Activated T-helper 1 cell treated with anti-CD3 and anti-CD28 coated beads, Interleukin-12 subunit alpha, Interleukin-12 subunit beta, Interleukin-2, Interleukin-4 antibody, amounts not matched to agents 30 ng/mL and 10 ng/mL and 1 ng/mL, durations not matched to agents 14 hours and 24 hours and 36 hours (primary cell): ENCODE measurements at regions of chr5 and their contacts with region 1.

Region 1: DNA sequence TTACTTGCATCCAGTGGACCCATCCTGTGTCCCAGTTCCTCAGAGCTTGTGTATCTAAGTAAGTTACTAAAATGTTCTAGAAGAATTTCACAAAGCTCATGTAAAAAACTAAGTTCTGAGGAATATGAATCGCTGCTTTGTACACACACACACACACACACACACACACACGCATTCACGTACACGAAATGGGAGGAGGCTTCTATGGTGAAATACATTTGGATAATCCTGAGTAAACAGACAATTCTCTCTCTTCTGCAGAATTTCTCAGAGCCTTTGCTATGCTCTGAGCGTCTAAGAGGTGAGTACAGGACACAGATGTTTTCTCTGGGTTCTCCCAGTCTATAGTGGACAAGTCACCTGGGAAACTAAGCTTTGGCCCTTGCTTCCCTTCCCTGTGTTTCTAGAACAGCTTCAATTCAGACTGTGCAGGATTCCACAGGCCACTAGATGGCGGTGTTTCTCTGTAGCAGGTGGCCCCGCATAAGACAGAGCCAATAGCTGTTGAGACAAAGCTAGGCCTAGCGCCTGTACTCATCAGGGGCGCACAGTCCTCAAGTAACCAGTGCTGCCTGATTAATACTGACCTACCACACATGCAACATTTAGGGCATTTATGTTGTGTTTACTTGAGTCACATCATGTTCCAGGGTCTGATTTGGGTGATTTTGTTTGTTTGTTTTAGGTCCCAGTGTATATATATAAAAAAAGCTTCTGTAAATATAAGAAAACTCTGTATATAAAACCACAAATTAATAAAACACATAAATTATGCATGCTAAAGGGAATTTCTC is 114.8 kb downstream of the LIFR start:
- DNase-seq: peak; percentile 70
- H3K4me3 Mint-ChIP-seq: no peak overlapping the region
- H3K27ac Mint-ChIP-seq: no peak overlapping the region
- H3K4me1 Mint-ChIP-seq: no peaks in the 10 kb centered on the region
- H3K27me3 Mint-ChIP-seq: peaks cover 45% of the 10 kb centered on the region

Region 2: DNA sequence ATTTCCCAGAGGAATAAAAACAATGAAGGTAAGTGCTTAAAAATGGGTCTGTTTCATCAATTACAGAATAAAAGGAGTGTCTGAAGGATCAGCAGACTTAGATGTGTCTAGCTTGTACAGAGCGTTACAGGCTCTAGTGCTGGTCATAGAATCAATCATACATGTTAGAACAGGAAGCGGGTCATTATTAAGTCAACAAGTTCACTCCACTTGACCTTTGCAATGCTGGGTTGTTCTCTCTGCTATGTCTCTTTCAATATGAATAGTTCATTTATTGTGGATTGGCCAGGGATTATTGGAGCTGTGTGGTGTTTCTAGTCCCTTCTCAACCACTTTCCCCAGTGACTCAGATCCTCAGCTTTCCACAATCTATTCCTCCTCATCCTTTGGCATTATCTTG is 204.0 kb before region 1 on chr5:
- intact Hi-C with region 1: no loop called
- DNase-seq: no peak
- H3K4me3 Mint-ChIP-seq: no peak overlapping the region
- H3K27ac Mint-ChIP-seq: no peak overlapping the region
- H3K4me1 Mint-ChIP-seq: no peaks in the 10 kb centered on the region
- H3K27me3 Mint-ChIP-seq: no peaks in the 10 kb centered on the region

Region 3: DNA sequence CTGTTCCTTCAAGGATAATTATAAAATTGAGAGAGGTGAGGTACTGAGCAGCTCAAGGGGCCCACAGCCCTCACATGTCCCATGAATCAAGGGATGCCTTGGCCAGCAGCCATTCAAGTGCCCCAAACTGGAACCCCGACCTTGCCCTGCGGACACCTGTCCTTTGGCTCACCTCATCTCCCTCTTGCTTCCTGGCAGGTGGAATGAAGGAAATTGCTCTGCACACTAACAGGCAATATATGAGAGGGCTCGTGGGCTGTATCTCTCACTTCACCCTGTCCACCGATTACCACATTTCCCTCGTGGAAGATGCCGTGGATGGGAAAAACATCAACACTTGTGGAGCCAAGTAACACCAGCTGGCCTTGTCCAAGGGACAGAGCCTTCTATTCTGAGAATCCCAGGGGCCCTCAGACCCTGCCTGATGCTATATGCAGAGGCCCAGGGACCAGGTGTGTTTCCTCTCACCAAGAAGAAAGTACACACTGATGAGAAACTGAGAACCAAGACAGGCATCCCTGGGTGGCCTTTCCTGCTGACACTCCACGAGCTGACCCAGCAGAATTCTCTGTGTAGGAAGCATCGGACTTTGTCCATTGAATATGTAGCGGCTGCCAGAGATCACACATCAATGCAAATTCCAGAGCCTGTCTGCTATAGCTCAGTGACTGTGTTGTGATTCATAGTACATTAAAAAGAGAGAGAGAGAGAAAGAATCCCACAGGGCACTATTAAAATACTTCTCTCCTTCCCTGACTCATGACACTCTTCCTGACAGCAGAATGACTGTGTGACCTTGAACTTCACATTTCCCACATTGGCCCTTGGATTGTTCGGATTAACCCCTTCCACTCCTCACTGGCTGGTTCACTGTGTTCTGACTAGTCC is 22.2 kb after region 1 on chr5:
- intact Hi-C with region 1: no loop called
- DNase-seq: no peak
- H3K4me3 Mint-ChIP-seq: no peak overlapping the region
- H3K27ac Mint-ChIP-seq: no peak overlapping the region
- H3K4me1 Mint-ChIP-seq: no peaks in the 10 kb centered on the region
- H3K27me3 Mint-ChIP-seq: peaks cover 26% of the 10 kb centered on the region

Region 4: GRCh38 chr5:38551030-38552017 is 109.7 kb after region 1 on chr5:
- intact Hi-C with region 1: loop called (anchors 1 kb)
- DNase-seq: no peak
- H3K4me3 Mint-ChIP-seq: no peak overlapping the region
- H3K27ac Mint-ChIP-seq: no peak overlapping the region
- H3K4me1 Mint-ChIP-seq: peaks cover 5% of the 10 kb centered on the region
- H3K27me3 Mint-ChIP-seq: peaks cover 46% of the 10 kb centered on the region

Region 5: DNA sequence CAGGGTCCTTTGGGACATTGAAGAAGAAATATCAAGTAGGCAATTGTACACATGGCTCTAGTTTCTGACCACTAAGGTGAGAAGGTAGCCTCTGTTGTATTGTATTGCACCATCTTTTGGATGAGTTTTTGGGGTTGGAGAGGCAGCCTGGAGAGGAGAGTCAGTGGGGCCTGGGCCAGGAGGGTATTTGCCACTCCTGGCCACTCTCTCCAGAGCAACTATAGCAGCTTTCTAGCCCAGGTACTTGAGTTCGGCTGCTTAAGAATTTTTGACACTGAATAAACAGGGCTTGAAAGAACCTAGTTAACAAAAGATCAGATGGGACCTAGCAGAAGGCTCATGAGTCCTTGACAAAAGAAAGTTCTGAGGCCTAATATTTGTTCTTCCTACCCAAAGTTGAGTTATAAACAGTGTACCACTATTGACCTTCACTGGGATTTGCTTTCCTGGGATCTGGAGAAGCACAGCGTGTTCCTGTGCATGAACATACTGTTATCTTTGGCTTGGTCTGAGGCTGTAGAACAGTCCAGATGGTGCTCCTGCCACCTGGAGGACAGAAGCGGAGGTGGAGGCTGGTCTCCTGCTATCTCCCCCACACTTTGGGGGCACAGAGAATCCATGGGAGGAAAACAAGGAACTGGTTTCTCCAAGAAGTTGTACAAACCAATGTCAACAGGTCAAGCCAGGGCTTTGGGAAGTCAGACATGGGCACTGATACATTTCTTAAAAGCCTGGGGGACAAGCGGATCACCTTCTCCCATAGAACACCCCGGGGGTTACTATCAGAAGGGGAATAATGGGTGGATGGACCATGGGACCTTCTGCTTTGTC is 225.2 kb after region 1 on chr5:
- intact Hi-C with region 1: loop called (anchors 1 kb)
- DNase-seq: no peak
- H3K4me3 Mint-ChIP-seq: no peak overlapping the region
- H3K27ac Mint-ChIP-seq: no peak overlapping the region
- H3K4me1 Mint-ChIP-seq: no peaks in the 10 kb centered on the region
- H3K27me3 Mint-ChIP-seq: peaks cover 3% of the 10 kb centered on the region

Region 6: GRCh38 chr5:38809388-38810359 is 368.0 kb after region 1 on chr5:
- intact Hi-C with region 1: loop called (anchors 1 kb)
- DNase-seq: peak; percentile 24
- H3K4me3 Mint-ChIP-seq: no peak overlapping the region
- H3K27ac Mint-ChIP-seq: no peak overlapping the region
- H3K4me1 Mint-ChIP-seq: no peaks in the 10 kb centered on the region
- H3K27me3 Mint-ChIP-seq: peaks cover 9% of the 10 kb centered on the region

Region 7: GRCh38 chr5:38922199-38922598 is 480.5 kb after region 1 on chr5:
- intact Hi-C with region 1: loop called (anchors 1 kb)
- DNase-seq: peak; percentile 9
- H3K4me3 Mint-ChIP-seq: no peak overlapping the region
- H3K27ac Mint-ChIP-seq: no peak overlapping the region
- H3K4me1 Mint-ChIP-seq: no peaks in the 10 kb centered on the region
- H3K27me3 Mint-ChIP-seq: peaks cover 14% of the 10 kb centered on the region

Region 8: DNA sequence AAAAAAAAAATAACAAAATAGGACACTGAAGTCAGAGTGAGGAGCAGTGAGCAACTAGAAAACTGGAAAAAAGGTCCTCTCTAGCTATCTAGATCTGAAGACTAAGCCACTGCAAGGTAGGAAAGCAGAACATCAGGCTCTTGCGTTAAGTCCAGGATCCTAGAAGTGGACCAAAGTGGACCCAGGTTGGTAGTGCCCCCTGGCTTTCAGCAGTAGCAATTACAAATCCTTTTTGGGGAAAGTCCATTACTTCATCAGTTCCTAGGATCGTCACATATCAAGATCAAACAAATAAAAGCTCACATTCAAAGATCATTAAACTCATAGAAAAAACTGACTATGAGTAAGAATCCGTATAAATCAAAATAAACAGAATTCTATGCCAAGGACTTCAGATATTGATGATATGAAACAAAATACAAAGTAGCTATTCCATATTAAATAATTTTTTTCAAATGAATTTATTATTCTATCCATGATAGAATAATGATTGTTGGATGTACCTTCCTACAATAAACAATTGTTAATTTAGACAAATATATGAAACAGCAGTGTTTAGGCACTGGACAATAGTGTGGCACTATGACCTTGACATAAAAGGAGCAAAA is 639.1 kb after region 1 on chr5:
- intact Hi-C with region 1: loop called (anchors 2 kb)
- DNase-seq: no peak
- H3K4me3 Mint-ChIP-seq: no peak overlapping the region
- H3K27ac Mint-ChIP-seq: no peak overlapping the region
- H3K4me1 Mint-ChIP-seq: peaks cover 30% of the 10 kb centered on the region
- H3K27me3 Mint-ChIP-seq: peaks cover 20% of the 10 kb centered on the region